Mammary epithelial cell (primary cell): ENCODE measurements at regions of chr7 and their contacts with region 1.

Region 1: DNA sequence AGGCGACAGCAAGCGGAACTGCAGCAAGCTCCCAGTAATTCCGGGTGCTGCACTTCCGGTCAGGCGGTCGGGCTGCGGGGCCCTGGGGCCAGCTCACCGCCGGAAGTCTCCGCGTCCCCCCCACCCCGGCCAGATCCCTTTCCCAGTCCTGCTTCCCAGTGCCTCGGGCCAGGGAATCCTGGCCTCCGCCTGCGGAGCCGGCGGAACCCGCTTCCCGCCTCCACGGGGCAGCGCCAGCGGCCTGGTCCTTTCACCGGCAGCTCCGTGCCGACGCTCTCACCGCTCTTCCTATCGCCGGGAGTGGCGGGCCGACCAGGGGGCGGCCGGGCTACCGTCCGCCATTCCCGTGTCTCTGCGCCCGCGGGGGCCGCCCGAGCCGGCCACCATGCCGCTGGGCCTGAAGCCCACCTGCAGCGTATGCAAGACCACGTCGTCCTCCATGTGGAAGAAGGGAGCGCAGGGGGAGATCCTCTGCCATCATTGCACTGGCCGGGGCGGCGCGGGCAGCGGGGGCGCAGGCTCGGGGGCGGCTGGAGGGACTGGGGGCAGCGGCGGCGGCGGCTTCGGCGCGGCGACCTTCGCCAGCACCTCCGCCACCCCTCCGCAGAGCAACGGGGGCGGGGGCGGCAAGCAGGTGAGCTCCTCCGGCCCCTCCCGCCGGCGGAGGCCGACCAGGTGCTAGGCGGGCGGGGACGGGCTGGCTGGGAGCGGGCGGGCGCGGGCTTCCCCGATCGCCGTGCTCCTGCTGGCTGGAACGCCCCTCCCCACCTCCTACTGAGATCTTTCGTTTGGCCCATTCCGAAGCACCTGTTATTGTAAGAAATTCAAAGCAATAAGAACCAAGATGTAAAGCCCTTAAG is at the start of gene GATAD1:
- DNase-seq: peak; percentile 86
- H3K4me3 ChIP-seq: peak within 1 kb of the TSS; percentile 97 to 98 (median 97)
- H3K27ac ChIP-seq: peak within 1 kb of the TSS; percentile 85
- H3K4me1 ChIP-seq: peaks cover 4% of the 10 kb centered on the region
- H3K27me3 ChIP-seq: no peaks in the 10 kb centered on the region
- CTCF ChIP-seq: peak; percentile 83 to 93
- total RNA-seq, gene GATAD1: 26.2 to 30.2 TPM

Region 2: GRCh38 chr7:91940572-91941341 is 506.8 kb before region 1 on chr7 and contains the start of gene AKAP9:
- CTCF ChIA-PET with region 1: no interaction called
- dilution Hi-C with region 1: no loop called
- in situ Hi-C with region 1: no loop called
- intact Hi-C with region 1: loop called (anchors 10 kb)
- DNase-seq: peak; percentile 86
- H3K4me3 ChIP-seq: peak within 1 kb of the TSS; percentile 80 to 95 (median 91)
- H3K27ac ChIP-seq: peak within 1 kb of the TSS; percentile 81
- H3K4me1 ChIP-seq: peaks cover 6% of the 10 kb centered on the region
- H3K27me3 ChIP-seq: no peaks in the 10 kb centered on the region
- CTCF ChIP-seq: no peak
- total RNA-seq, gene AKAP9: 34.8 to 42.1 TPM

Region 3: GRCh38 chr7:92178927-92179924 is 268.3 kb before region 1 on chr7 and contains the start of gene LRRD1:
- CTCF ChIA-PET with region 1: no interaction called
- dilution Hi-C with region 1: no loop called
- in situ Hi-C with region 1: no loop called
- intact Hi-C with region 1: loop called (anchors 1 kb)
- DNase-seq: peak; percentile 82
- H3K4me3 ChIP-seq: peak within 1 kb of the TSS; percentile 31 to 57 (median 44)
- H3K27ac ChIP-seq: no peak within 1 kb of the TSS
- H3K4me1 ChIP-seq: no peaks in the 10 kb centered on the region
- H3K27me3 ChIP-seq: no peaks in the 10 kb centered on the region
- CTCF ChIP-seq: peak; percentile 89 to 93
- total RNA-seq, gene LRRD1: under 0.01 TPM in 1 of 2 donors, not detected in the other

Region 4: DNA sequence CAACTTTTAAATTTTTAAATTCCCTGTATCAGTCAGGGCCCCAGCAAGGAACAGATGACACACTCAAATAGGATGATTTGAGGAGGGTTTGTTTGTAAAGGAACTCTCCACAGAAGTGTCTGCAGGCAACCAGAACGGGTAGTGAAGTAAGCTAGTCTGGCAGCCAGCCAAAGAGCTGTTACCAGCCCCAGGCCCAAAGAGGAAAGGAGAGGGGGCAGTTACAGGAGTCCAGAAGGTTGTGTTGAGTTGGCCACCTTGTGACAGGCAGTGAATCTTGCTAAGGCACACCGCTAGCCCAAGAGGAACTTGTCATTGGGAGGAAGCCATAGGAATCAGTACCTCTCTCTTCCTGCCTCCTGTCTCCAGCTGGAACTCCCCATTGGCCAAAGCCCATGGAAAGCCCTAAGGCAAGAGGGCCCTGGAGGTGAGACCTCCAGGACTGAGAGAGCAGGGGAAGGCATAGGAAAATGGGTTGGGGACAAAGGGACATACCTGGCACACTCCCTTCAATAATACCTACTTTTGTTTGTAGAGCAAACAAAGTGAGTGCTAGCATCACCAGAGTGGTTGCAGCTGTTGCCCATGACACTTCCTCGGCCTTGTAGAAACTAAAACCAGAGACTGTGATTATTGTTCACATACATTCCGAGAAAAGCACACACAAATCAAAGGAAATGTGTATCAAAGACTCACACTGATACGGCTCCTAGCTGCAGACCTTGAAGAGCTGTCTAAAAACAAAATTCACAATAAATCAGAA is 25.7 kb before region 1 on chr7:
- CTCF ChIA-PET with region 1: interaction called, 3 read pairs
- dilution Hi-C with region 1: loop called (anchors 5 kb)
- in situ Hi-C with region 1: no loop called
- intact Hi-C with region 1: loop called (anchors 1 kb)
- DNase-seq: no peak
- H3K4me3 ChIP-seq: no peak overlapping the region
- H3K27ac ChIP-seq: no peak overlapping the region
- H3K4me1 ChIP-seq: no peaks in the 10 kb centered on the region
- H3K27me3 ChIP-seq: no peaks in the 10 kb centered on the region
- CTCF ChIP-seq: no peak